ENCODE measurements at regions of chr12 and their contacts with region 1.

Region 1: DNA sequence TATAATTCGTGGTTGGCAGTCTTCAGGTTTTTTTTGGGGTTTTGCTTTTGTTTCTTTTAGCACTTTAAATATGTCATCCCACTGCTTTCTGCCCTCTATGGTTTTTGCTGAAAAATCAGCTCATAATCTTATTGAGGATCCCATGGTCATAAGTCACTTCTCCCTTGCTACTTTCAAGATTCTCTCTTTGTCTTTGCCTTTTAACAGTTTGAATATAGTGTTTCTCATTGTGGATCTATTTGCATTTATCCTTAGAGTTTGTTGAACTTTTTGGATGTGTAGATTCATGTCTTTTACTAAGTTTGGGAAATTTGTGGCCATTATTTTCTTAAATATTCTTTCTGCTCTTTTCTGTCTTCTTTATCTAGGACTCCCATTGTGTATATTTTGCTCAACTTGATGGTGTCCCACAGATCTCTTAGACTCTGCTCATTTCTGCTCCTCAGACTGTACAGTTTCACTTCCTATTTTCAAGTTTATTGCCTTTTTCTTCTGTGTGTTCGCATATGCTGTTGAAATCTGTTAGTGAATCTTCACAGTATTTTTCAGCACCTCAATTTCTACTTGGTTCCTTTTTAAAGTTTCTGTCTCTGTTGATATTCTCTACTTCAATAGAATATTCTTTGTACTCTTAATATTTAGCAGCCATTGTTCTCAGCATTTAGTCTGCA is 70.8 kb downstream of the WNK1 start:
- H3K4me3 Mint-ChIP-seq: peak overlapping the region; percentile 33
- H3K27ac Mint-ChIP-seq: peak overlapping the region; percentile 81
- H3K4me1 Mint-ChIP-seq: peaks cover 45% of the 10 kb centered on the region
- H3K27me3 Mint-ChIP-seq: no peaks in the 10 kb centered on the region

Region 2: DNA sequence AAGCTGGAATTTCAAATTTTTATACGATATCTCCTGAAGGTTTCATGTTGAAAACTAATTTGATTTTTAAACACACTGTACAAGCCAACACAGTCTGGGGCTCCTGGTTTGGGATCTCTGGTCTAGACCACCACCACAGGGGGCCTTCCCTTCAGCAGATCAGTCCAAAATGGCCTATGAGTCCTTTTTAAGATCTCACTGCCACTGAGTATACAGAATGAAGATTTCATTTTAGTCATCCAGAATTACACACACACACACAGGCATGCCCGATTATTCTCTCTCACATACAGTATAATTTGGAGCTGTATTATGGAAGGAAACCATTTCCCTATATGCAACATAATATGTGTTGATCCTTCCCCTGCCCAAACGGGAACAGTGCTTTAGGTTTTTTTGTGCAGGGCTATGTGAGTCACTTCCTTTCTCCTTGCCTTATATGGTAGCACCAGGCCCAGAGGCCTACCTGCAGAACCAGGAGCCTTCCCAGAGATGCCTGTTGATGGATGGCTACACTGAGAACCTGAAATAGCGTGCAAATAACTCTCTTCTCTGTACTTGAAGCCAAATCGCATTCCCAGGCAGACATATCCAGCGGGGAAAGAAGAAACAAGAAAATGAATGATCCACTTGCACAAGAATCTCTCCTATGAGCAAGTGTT is 98.8 kb before region 1 on chr12:
- intact Hi-C with region 1: no loop called
- H3K4me3 Mint-ChIP-seq: no peak overlapping the region
- H3K27ac Mint-ChIP-seq: peak overlapping the region; percentile 82
- H3K4me1 Mint-ChIP-seq: peaks cover 43% of the 10 kb centered on the region
- H3K27me3 Mint-ChIP-seq: no peaks in the 10 kb centered on the region

Region 3: DNA sequence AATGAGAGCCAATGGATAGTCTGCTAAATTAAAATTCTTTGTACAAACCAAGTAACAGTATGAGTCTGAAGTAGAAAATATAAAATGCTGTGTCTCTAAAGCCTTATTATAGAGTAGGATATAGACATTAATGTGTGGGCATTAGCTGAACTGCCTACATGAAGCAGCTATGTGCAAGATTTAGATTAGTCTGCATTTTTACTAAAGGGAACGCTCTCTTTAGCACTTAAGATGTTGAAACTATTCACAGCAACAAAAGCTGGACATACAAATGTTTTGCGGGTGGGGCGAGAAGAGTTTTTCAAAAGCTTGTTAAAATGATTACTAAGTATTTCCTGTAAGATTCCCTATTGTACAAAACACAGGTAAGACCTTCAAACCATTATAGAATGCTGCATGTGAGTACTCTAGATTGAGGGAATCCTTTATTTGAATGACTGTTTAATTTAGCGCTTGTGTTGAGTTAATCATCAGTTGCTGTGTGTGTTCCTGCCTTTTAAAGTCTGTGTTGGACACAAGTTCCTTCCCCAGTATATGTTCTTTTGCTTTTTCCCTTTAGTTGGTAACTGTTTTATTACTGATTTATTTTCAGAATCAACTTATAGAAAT is 39.2 kb after region 1 on chr12:
- intact Hi-C with region 1: loop called (anchors 5 kb)
- H3K4me3 Mint-ChIP-seq: no peak overlapping the region
- H3K27ac Mint-ChIP-seq: no peak overlapping the region
- H3K4me1 Mint-ChIP-seq: no peaks in the 10 kb centered on the region
- H3K27me3 Mint-ChIP-seq: no peaks in the 10 kb centered on the region

Region 4: DNA sequence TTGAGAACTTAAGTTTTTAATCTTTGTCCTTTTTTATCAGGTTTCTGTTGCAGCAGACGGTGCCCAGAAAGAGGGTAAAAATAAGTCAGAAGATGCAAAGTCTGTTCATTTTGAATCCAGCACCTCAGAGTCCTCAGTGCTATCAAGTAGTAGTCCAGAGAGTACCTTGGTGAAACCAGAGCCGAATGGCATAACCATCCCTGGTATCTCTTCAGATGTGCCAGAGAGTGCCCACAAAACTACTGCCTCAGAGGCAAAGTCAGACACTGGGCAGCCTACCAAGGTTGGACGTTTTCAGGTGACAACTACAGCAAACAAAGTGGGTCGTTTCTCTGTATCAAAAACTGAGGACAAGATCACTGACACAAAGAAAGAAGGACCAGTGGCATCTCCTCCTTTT is 72.9 kb after region 1 on chr12:
- intact Hi-C with region 1: loop called (anchors 10 kb)
- H3K4me3 Mint-ChIP-seq: no peak overlapping the region
- H3K27ac Mint-ChIP-seq: no peak overlapping the region
- H3K4me1 Mint-ChIP-seq: no peaks in the 10 kb centered on the region
- H3K27me3 Mint-ChIP-seq: no peaks in the 10 kb centered on the region

Region 5: GRCh38 chr12:1093166-1093751 is 270.1 kb after region 1 on chr12:
- intact Hi-C with region 1: loop called (anchors 10 kb)
- H3K4me3 Mint-ChIP-seq: no peak overlapping the region
- H3K27ac Mint-ChIP-seq: no peak overlapping the region
- H3K4me1 Mint-ChIP-seq: no peaks in the 10 kb centered on the region
- H3K27me3 Mint-ChIP-seq: no peaks in the 10 kb centered on the region

Measured in dendritic cell treated with granulocyte-macrophage colony-stimulating factor and Interleukin-4, amounts not matched to agents 40 ng/mL and 50 ng/mL, for 4 days (primary cell).